CD4-positive, alpha-beta T cell (primary cell): ENCODE measurements at regions of chr13 and their contacts with region 1.

Region 1: GRCh38 chr13:41075034-41075433 is 13.7 kb downstream of the WBP4 start:
- DNase-seq: peak in 13 of 14 experiments; percentile 3 to 75 (median 20)
- ATAC-seq: peak; percentile 49
- H3K4me3 ChIP-seq: no peak overlapping the region
- H3K4me3 Mint-ChIP-seq: no peak overlapping the region
- H3K27ac ChIP-seq: no peak overlapping the region
- H3K27ac Mint-ChIP-seq: no peak overlapping the region
- H3K4me1 ChIP-seq: no peaks in the 10 kb centered on the region
- H3K4me1 Mint-ChIP-seq: no peaks in the 10 kb centered on the region
- H3K27me3 ChIP-seq: no peaks in the 10 kb centered on the region
- H3K27me3 Mint-ChIP-seq: no peaks in the 10 kb centered on the region
- CTCF ChIP-seq: peak; percentile 53

Region 2: DNA sequence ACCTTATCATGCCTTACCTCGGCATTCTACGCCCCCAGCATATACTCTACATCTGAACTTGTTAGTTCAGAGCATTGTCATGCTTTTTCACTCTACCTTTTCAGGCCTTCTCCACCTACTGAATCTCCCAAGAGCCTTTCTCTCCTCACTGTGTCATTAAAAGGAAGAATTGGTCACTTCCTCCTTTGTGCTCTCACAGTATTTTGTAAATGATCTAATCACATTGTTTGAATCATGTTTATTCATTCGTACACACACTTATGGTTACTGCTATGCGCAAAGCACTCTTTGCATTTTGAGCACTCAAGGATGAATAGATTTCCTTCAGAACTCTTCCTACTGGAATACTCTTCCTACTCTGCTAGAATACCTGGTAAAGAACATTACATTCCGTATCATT is 40.2 kb before region 1 on chr13:
- CTCF ChIA-PET with region 1: no interaction called
- POLR2A ChIA-PET with region 1: no interaction called
- intact Hi-C with region 1: no loop called
- DNase-seq: no peak
- ATAC-seq: no peak
- H3K4me3 ChIP-seq: no peak overlapping the region
- H3K4me3 Mint-ChIP-seq: no peak overlapping the region
- H3K27ac ChIP-seq: no peak overlapping the region
- H3K27ac Mint-ChIP-seq: no peak overlapping the region
- H3K4me1 ChIP-seq: no peaks in the 10 kb centered on the region
- H3K4me1 Mint-ChIP-seq: peaks cover 19% of the 10 kb centered on the region
- H3K27me3 ChIP-seq: no peaks in the 10 kb centered on the region
- H3K27me3 Mint-ChIP-seq: no peaks in the 10 kb centered on the region
- CTCF ChIP-seq: no peak

Region 3: GRCh38 chr13:41222259-41222852 is 147.3 kb after region 1 on chr13:
- CTCF ChIA-PET with region 1: interaction called, 5 read pairs
- POLR2A ChIA-PET with region 1: no interaction called
- intact Hi-C with region 1: loop called (anchors 1 kb)
- DNase-seq: peak in 13 of 14 experiments; percentile 27 to 74 (median 38)
- ATAC-seq: peak; percentile 91
- H3K4me3 ChIP-seq: no peak overlapping the region
- H3K4me3 Mint-ChIP-seq: no peak overlapping the region
- H3K27ac ChIP-seq: no peak overlapping the region
- H3K27ac Mint-ChIP-seq: no peak overlapping the region
- H3K4me1 ChIP-seq: no peaks in the 10 kb centered on the region
- H3K4me1 Mint-ChIP-seq: no peaks in the 10 kb centered on the region
- H3K27me3 ChIP-seq: no peaks in the 10 kb centered on the region
- H3K27me3 Mint-ChIP-seq: no peaks in the 10 kb centered on the region
- CTCF ChIP-seq: peak; percentile 82